Activated T-helper 1 cell treated with anti-CD3 and anti-CD28 coated beads, Interleukin-12 subunit alpha, Interleukin-12 subunit beta, Interleukin-2, Interleukin-4 antibody, amounts not matched to agents 30 ng/mL and 10 ng/mL and 1 ng/mL, durations not matched to agents 14 hours and 24 hours and 36 hours (primary cell): ENCODE measurements at regions of chr6 and their contacts with region 1.

Region 1: DNA sequence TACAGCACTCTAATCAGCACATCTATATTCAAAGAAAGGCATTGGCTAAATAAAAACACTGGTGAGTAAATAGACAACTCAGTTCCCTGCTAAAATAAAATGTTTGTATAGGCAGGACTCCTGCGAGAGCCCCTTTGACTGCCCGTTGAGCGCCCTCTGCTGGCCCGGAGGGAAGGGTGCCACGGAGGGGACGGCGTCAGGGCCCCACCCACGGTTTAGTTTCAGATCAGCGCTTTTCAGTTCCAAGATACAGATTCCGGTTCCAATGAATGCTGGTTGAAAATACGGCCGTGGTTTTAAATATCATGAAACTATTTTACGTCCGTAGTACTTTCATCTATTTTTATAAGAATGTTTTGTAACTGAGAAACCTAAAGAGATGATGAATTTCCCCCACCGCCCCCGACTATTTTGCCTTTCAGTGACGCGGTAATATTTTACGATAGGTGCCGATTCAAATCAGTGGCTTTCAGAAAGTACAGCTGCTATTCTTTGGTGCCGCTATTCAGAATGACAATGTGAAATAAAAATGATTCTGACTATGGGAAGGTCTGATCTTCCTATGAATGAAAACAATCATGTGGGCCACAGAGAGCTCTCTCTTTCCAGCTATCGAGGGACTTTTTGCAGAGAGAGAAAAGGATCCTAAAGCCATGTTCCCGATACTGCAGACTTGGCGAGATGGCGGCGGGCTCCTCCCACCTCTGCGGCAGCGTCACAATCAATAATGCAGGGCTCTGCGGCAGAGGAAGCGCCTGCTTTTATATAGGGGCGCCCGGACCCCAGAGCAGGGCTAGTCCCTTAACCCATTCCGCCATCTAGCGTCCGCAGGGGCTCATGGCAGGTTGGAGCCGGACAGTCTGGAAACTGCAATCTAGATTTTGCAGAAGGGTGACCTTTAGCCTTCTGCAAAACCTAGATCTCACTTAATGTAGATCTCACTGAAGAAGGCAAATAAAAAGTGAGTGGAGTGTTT is 10.6 kb upstream of the CCN6 start:
- DNase-seq: peak; percentile 83
- H3K4me3 Mint-ChIP-seq: peak overlapping the region; percentile 92
- H3K27ac Mint-ChIP-seq: peak overlapping the region; percentile 92
- H3K4me1 Mint-ChIP-seq: peaks cover 42% of the 10 kb centered on the region
- H3K27me3 Mint-ChIP-seq: no peaks in the 10 kb centered on the region

Region 2: GRCh38 chr6:111057074-111057752 is 986.1 kb before region 1 on chr6:
- intact Hi-C with region 1: loop called (anchors 5 kb)
- DNase-seq: no peak
- H3K4me3 Mint-ChIP-seq: no peak overlapping the region
- H3K27ac Mint-ChIP-seq: no peak overlapping the region
- H3K4me1 Mint-ChIP-seq: no peaks in the 10 kb centered on the region
- H3K27me3 Mint-ChIP-seq: peaks cover 3% of the 10 kb centered on the region

Region 3: DNA sequence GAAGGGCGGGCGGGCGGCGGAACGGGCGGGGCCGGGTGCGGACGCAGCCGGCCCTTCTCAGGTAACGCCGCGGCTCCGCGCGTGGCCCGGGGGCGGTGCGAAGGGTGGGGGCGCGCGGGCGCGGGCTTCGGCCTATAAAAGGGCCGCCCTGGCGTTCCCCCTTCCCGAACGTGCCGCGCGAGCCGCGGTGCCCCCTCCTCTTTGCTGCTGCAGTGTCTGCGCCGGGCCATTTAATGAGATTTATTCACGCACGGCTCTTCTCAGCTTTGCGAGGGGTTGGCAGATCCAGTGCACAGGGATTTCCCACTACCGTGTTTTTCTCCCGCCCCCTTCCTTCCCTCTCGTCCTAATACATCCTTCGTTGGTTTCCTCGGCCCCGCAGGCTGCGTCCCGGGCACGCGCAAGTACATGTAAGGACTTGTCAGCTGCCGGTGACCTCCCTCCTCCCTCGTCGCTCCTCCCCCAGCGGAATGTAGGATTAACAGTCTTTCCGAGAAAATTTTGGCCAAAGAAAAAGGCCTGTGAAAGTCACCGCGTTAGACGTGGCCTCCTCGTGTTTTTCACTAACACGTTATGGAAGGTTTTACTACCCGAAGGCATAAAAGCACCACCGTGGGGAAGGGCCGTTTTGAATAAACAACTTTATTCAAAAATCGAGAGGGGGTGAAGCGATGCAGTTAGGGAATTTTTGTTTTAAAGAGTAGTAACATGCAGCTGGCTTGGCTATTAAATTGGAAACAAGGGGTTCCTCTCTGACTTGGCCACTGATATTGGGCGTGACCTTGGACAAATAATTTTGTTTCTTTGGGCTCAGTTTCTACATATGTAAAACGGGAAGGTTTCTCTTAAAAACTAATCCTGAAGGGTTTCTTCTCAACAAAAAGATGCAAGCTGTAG is 559.3 kb before region 1 on chr6:
- intact Hi-C with region 1: loop called (anchors 1 kb)
- DNase-seq: peak; percentile 83
- H3K4me3 Mint-ChIP-seq: peak overlapping the region; percentile 93
- H3K27ac Mint-ChIP-seq: peak overlapping the region; percentile 98
- H3K4me1 Mint-ChIP-seq: peaks cover 56% of the 10 kb centered on the region
- H3K27me3 Mint-ChIP-seq: no peaks in the 10 kb centered on the region

Region 4: GRCh38 chr6:111764238-111765175 is 278.8 kb before region 1 on chr6:
- intact Hi-C with region 1: loop called (anchors 1 kb)
- DNase-seq: peak; percentile 41
- H3K4me3 Mint-ChIP-seq: peak overlapping the region; percentile 74
- H3K27ac Mint-ChIP-seq: peak overlapping the region; percentile 90
- H3K4me1 Mint-ChIP-seq: peaks cover 100% of the 10 kb centered on the region
- H3K27me3 Mint-ChIP-seq: no peaks in the 10 kb centered on the region

Region 5: GRCh38 chr6:111873178-111874024 is 169.9 kb before region 1 on chr6 and contains the start of gene FYN:
- intact Hi-C with region 1: loop called (anchors 1 kb)
- DNase-seq: peak; percentile 98
- H3K4me3 Mint-ChIP-seq: peak within 1 kb of the TSS; percentile 99
- H3K27ac Mint-ChIP-seq: peak within 1 kb of the TSS; percentile 96
- H3K4me1 Mint-ChIP-seq: peaks cover 44% of the 10 kb centered on the region
- H3K27me3 Mint-ChIP-seq: peaks cover 6% of the 10 kb centered on the region
- total RNA-seq, gene FYN: 347 and 355 TPM in 2 replicates

Region 6: DNA sequence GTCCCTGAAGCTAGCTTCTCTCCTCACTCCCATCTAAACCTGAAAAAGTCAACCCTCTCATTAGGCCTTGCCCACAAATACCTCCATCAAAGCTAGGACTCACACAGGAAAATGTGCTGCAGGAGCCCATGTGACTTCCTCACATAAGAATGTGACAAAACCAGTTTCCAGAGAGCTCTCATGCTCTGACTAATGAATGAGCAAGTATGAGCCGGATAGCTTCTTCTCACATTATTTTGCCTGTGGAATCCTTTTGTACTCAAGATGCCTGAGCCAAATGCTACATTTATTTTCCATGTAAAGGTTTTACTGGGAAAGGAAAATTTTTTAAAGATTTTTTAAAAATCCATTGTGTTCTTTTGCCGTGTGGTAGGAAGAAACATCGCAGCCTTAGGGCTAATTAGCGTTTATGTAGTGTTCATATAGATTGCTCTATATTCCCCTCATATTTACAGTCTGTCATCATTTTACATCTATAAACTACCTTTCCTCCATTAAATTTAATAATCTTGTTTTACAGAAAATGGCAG is 58.1 kb before region 1 on chr6:
- intact Hi-C with region 1: no loop called
- DNase-seq: no peak
- H3K4me3 Mint-ChIP-seq: peak overlapping the region; percentile 5
- H3K27ac Mint-ChIP-seq: peak overlapping the region; percentile 78
- H3K4me1 Mint-ChIP-seq: peaks cover 71% of the 10 kb centered on the region
- H3K27me3 Mint-ChIP-seq: no peaks in the 10 kb centered on the region

Region 7: DNA sequence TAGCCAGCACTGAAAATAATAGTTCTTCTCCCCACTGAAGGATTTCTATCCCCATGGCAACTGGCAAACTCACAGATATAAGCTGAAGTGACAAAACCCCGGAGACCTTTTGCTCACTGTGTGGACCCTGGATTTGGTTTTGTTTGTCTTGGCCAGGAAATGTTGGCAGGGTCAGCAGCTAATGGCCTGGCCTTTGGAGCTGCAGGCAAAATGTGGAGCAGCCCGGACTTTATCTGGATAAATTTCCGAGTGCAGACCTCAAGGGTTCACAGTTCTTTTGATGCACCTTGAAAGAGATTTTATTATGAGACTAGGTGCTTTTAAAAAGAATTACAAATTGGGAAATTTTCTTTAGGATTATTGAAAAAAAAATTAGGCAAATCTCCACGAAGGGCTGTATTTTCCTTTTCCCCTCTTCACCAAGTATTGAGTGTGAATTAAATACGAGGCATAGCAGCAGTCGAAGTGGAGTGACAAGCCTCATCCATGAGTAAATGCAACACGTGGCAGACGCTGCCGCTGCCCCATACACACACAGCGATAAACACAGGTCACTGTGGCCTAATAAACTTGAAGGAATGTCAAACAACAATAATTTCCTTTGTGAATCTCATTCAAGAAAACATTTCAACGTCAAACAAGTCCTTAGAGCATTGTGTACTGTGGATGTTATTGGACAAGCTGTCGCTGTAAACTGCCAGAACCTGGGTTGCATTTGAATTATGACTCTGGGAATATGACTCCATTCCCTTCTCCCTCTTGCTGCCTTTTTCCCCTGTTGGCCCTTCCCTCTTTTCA is 24.5 kb before region 1 on chr6:
- intact Hi-C with region 1: loop called (anchors 1 kb)
- DNase-seq: no peak
- H3K4me3 Mint-ChIP-seq: no peak overlapping the region
- H3K27ac Mint-ChIP-seq: no peak overlapping the region
- H3K4me1 Mint-ChIP-seq: peaks cover 50% of the 10 kb centered on the region
- H3K27me3 Mint-ChIP-seq: no peaks in the 10 kb centered on the region